PC-9 (cell line): ENCODE measurements at regions of chr15 and their contacts with region 1.

Region 1: GRCh38 chr15:76954744-76955143 is 23.2 kb downstream of the RCN2 start:
- DNase-seq: no peak
- H3K4me3 ChIP-seq: no peak overlapping the region
- H3K27ac ChIP-seq: no peak overlapping the region
- H3K4me1 ChIP-seq: no peaks in the 10 kb centered on the region
- H3K27me3 ChIP-seq: no peaks in the 10 kb centered on the region
- CTCF ChIP-seq: no peak

Region 2: DNA sequence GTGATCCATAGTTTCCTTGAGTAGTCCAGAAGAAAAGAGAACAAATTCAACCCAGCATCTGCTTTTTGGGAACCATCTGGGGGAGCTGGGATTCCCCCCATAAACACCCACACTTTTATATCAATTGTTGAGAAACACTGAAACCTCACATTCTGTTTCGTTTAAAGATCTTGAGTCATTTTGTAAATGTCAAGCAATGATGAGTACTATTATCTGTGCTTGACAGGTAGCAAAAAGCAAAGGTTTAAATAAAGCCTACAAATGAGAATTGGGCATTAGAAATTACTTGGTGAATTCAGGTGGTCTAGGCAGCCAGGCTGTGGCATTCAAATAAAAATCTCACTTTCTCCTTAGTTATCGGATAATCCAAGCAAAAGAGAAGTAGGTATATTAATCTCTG is 819.2 kb before region 1 on chr15:
- CTCF ChIA-PET with region 1: no interaction called
- POLR2A ChIA-PET with region 1: no interaction called
- intact Hi-C with region 1: no loop called
- DNase-seq: no peak
- H3K4me3 ChIP-seq: no peak overlapping the region
- H3K27ac ChIP-seq: no peak overlapping the region
- H3K4me1 ChIP-seq: no peaks in the 10 kb centered on the region
- H3K27me3 ChIP-seq: no peaks in the 10 kb centered on the region
- CTCF ChIP-seq: no peak

Region 3: DNA sequence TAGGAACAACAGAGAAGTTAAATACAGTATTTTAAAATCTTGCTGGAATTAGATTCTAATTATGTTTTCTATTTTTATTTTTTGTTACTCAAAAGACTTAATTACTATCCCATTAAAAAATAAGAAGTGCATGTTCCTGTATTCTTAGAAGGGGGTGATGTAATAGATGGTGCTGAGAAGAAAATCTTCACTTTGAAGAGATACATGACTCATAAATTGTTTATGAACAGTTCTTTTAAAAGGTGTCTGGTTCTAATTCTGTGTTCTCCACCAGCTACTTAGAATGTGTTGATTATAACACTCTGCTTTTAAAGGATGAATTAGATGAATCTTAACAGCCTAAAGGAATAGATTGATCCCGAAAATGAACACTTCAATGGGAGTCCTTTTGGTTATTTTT is 15.0 kb before region 1 on chr15:
- CTCF ChIA-PET with region 1: no interaction called
- POLR2A ChIA-PET with region 1: no interaction called
- intact Hi-C with region 1: no loop called
- DNase-seq: no peak
- H3K4me3 ChIP-seq: no peak overlapping the region
- H3K27ac ChIP-seq: peak overlapping the region; percentile 51
- H3K4me1 ChIP-seq: no peaks in the 10 kb centered on the region
- H3K27me3 ChIP-seq: no peaks in the 10 kb centered on the region
- CTCF ChIP-seq: no peak

Region 4: DNA sequence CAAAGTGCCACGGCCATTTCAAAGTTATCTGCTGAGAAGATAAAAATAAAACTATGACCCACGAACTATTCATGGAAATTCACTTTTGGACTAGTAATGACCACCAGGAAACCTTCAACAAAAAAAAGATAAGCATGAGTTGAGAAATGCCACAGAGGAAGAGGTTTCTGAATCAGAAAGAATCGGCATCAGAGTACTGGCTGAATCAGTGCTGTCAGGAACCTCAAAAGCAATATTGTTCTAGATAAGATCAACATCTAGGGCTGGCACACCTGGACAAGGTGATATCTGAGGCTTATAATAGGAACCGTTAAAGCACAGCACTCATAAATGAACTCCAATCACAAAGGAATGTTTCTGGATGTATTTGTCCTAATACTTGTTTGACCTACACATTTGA is 392.5 kb after region 1 on chr15:
- CTCF ChIA-PET with region 1: no interaction called
- POLR2A ChIA-PET with region 1: no interaction called
- intact Hi-C with region 1: no loop called
- DNase-seq: no peak
- H3K4me3 ChIP-seq: no peak overlapping the region
- H3K27ac ChIP-seq: no peak overlapping the region
- H3K4me1 ChIP-seq: no peaks in the 10 kb centered on the region
- H3K27me3 ChIP-seq: no peaks in the 10 kb centered on the region
- CTCF ChIP-seq: no peak

Region 5: GRCh38 chr15:77616022-77616421 is 661.3 kb after region 1 on chr15:
- CTCF ChIA-PET with region 1: no interaction called
- POLR2A ChIA-PET with region 1: interaction called, 10 read pairs
- intact Hi-C with region 1: no loop called
- DNase-seq: no peak
- H3K4me3 ChIP-seq: no peak overlapping the region
- H3K27ac ChIP-seq: no peak overlapping the region
- H3K4me1 ChIP-seq: no peaks in the 10 kb centered on the region
- H3K27me3 ChIP-seq: peaks cover 3% of the 10 kb centered on the region; the same call in 1 of the 2 replicates
- CTCF ChIP-seq: no peak